Transverse colon (tissue), 4 donors: ENCODE measurements at regions of chr19 and their contacts with region 1.

Region 1: DNA sequence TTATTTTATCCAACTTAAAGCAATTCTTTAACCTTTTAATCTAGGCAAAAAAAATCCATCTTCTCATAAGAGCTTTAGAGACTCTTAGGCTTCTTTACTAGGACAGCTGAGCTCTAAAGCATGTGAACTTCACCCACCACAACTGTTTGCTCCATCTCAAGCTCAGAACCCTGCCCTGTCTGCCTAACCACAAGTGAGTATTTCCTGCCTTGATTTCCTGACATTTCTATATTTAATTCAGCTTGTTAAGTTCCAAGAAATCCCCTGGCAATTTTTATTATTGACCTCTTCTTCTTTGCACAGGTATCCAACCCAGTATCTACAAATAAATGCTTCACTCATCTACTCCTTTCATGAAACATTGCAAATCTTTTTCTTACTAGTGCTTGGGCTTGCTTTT is 21.1 kb upstream of the CEACAM21 start:
- DNase-seq: no peak
- H3K4me3 ChIP-seq: no peak overlapping the region
- H3K27ac ChIP-seq: no peak overlapping the region
- H3K4me1 ChIP-seq: no peaks in the 10 kb centered on the region
- H3K27me3 ChIP-seq: peaks cover 56% of the 10 kb centered on the region
- CTCF ChIP-seq: no peak
- EP300 ChIP-seq: no peak
- POLR2A ChIP-seq: no peak

Region 2: GRCh38 chr19:41457241-41457640 is 97.7 kb before region 1 on chr19:
- in situ Hi-C with region 1: loop called in 2 of 4 experiments (anchors 5 to 25 kb)
- intact Hi-C with region 1: no loop called
- DNase-seq: no peak
- H3K4me3 ChIP-seq: no peak overlapping the region
- H3K27ac ChIP-seq: no peak overlapping the region
- H3K4me1 ChIP-seq: peaks cover 0 to 4% (median 0%) of the 10 kb centered on the region in 4 donors
- H3K27me3 ChIP-seq: peaks cover 23% of the 10 kb centered on the region
- CTCF ChIP-seq: no peak
- EP300 ChIP-seq: no peak
- POLR2A ChIP-seq: no peak

Region 3: GRCh38 chr19:41575998-41576397 is 21.1 kb after region 1 on chr19 and contains the start of gene CEACAM21:
- in situ Hi-C with region 1: no loop called
- intact Hi-C with region 1: no loop called
- DNase-seq: peak; percentile 66
- H3K4me3 ChIP-seq: no peak within 1 kb of the TSS
- H3K27ac ChIP-seq: peak within 1 kb of the TSS in 1 of 4 donors; percentile 35
- H3K4me1 ChIP-seq: no peaks in the 10 kb centered on the region
- H3K27me3 ChIP-seq: peaks cover 12% of the 10 kb centered on the region
- CTCF ChIP-seq: no peak
- EP300 ChIP-seq: no peak
- POLR2A ChIP-seq: peak; percentile 28
- total RNA-seq, gene CEACAM21: 0.41 to 1.1 (median 0.95) TPM in 3 of 4 donors, not detected in the other

Region 4: GRCh38 chr19:41859618-41860418 is 304.9 kb after region 1 on chr19 and contains the start of gene RPS19:
- in situ Hi-C with region 1: no loop called
- intact Hi-C with region 1: no loop called
- DNase-seq: peak; percentile 99
- H3K4me3 ChIP-seq: peak within 1 kb of the TSS; percentile 72 to 92 (median 80)
- H3K27ac ChIP-seq: peak within 1 kb of the TSS; percentile 93 to 97 (median 95)
- H3K4me1 ChIP-seq: peaks cover 26 to 38% (median 29%) of the 10 kb centered on the region in 4 donors
- H3K27me3 ChIP-seq: no peaks in the 10 kb centered on the region
- CTCF ChIP-seq: peak; percentile 62 to 99 (median 79)
- EP300 ChIP-seq: no peak
- POLR2A ChIP-seq: peak; percentile 83
- total RNA-seq, gene RPS19: 595 to 1,336 (median 1,016) TPM